Activated B cell treated with CpG ODN at 0.5 μM for 24 hours (primary cell): ENCODE measurements at regions of chr4 and their contacts with region 1.

Region 1: GRCh38 chr4:122758033-122758432 is 25.5 kb downstream of the BBS12 start:
- DNase-seq: no peak
- ATAC-seq: no peak
- H3K4me3 Mint-ChIP-seq: no peak overlapping the region
- H3K27ac Mint-ChIP-seq: no peak overlapping the region
- H3K4me1 Mint-ChIP-seq: peaks cover 22% of the 10 kb centered on the region
- H3K27me3 Mint-ChIP-seq: peaks cover 2% of the 10 kb centered on the region
- CTCF ChIP-seq: peak; percentile 74

Region 2: DNA sequence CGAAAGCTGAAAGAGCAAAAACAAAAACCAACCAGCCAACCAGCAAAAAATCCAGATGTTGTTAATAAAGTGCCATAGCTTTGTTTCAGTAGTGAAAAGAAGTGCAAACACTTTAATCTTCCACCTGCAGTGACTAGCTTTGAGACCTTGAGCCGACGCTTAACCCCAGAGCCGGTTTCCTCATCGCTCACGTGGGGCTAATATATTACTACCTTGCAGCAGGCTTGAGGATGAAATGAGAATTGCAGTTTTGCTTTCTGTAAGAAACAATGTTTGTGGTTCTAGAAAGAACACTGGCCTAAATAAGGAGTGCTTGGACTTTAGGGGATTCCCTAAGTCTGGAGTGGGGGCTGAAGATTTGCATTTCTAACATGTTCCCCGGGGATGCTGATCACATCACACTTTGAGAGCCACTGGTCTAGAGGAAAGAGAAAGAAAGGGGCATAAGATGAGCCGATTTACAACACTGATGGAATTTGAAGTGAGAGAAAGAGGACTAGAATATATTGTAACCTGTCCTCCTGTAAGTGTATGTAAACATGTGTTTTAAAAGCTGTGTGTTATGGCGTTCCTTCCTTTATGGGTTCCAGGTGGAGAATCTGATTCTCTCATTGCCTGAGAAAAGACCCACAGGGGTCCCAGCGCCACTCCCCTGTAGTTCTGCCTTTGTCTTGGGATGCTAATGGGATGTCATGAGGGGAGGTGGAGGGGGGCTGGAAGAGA is 70.0 kb after region 1 on chr4:
- CTCF ChIA-PET with region 1: interaction called, 3 read pairs
- POLR2A ChIA-PET with region 1: no interaction called
- intact Hi-C with region 1: loop called (anchors 5 kb)
- DNase-seq: no peak
- ATAC-seq: peak; percentile 77
- H3K4me3 Mint-ChIP-seq: peak overlapping the region; percentile 81
- H3K27ac Mint-ChIP-seq: peak overlapping the region; percentile 32
- H3K4me1 Mint-ChIP-seq: peaks cover 18% of the 10 kb centered on the region
- H3K27me3 Mint-ChIP-seq: peaks cover 70% of the 10 kb centered on the region
- CTCF ChIP-seq: no peak

Region 3: DNA sequence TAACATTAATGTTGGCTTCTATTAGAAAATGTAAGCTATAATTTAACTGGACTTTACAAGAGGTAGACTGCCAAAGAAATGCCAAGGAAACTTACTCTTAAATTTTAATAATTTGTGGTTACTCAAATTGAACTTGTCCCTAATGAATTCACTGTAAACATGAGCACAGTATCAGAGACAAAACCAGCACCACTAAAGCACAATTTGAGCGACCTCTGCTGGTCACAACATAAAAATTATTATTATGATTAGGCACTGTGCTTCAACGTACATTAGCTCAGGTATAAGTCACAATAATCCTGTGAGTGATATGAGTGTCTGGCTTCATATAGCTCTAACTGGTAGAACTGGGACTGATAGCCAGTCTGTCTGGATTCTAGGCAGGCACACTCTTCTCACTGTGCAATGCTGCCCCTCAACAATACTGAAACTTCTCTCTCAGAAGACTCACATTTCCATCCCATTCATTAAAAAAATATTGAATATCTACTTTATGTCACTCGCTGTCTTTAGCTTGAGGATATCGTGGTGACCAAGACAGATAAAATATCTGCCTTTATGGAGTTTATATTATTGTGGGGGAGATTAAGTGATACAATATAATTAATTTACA is 156.4 kb after region 1 on chr4:
- CTCF ChIA-PET with region 1: interaction called, 32 read pairs
- POLR2A ChIA-PET with region 1: no interaction called
- intact Hi-C with region 1: loop called (anchors 1 kb)
- DNase-seq: no peak
- ATAC-seq: peak; percentile 54
- H3K4me3 Mint-ChIP-seq: no peak overlapping the region
- H3K27ac Mint-ChIP-seq: no peak overlapping the region
- H3K4me1 Mint-ChIP-seq: no peaks in the 10 kb centered on the region
- H3K27me3 Mint-ChIP-seq: no peaks in the 10 kb centered on the region
- CTCF ChIP-seq: no peak